GM10248 (cell line): ENCODE measurements at regions of chr6 and their contacts with region 1.

Region 1: DNA sequence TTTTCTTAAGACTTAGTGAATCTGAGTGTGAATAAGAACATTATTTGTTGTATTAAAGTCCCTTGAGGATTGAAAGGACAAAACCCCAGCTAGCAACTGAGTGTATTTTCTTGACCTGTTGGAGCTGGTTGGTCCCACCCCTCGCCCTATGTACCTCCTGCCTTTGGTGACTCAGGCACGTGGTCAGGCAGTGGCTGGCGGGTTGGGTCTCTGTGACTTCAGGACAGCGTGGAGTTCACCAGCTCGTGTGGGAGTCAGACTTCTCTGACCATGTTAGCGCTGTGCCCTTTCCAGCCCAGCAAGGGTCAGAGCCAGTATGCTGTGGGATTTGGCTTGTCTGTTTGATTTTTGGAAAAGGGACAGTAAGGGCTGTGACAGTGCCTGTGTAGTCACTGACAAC is 93.7 kb downstream of the SSR1 start:
- DNase-seq: no peak
- CTCF ChIP-seq: no peak

Region 2: GRCh38 chr6:7016226-7016625 is 203.1 kb before region 1 on chr6:
- CTCF ChIA-PET with region 1: no interaction called
- POLR2A ChIA-PET with region 1: no interaction called
- DNase-seq: no peak
- CTCF ChIP-seq: no peak

Region 3: DNA sequence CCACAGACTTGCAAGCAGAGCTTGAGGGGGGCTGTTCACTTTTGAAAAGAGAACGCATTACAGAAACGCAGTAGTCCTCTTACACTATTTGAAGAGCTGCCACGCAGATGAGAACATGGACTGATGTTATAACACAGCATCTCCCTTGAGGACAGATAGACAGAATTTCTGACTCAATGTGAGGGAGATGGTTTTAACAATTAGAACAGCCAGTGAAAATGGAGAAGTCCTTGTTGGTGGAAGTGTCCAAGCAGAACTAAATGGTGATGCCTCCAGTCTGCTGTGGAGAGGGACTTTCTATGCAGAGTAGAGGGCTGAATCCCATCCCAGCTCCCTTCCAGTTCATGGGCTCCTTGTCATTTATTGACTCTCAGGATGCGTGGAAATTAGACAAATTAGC is 11.6 kb before region 1 on chr6:
- CTCF ChIA-PET with region 1: interaction called, 13 read pairs
- POLR2A ChIA-PET with region 1: no interaction called
- DNase-seq: no peak
- CTCF ChIP-seq: no peak

Region 4: GRCh38 chr6:8525373-8525772 is 1306.1 kb after region 1 on chr6:
- CTCF ChIA-PET with region 1: no interaction called
- POLR2A ChIA-PET with region 1: interaction called, 10 read pairs
- DNase-seq: no peak
- CTCF ChIP-seq: no peak